Left lung (tissue), 14 donors: ENCODE measurements at regions of chr1 and their contacts with region 1.

Region 1: GRCh38 chr1:163071405-163072255 is 2.5 kb downstream of the RGS4 start:
- DNase-seq: peak in 2 of 4 donors; percentile 26 to 64
- ATAC-seq: peak; percentile 71
- H3K4me3 ChIP-seq: no peak overlapping the region
- H3K27ac ChIP-seq: no peak overlapping the region
- H3K4me1 ChIP-seq: peaks cover 0 to 4% of the 10 kb centered on the region in 2 donors
- H3K27me3 ChIP-seq: peaks cover 0 to 16% of the 10 kb centered on the region in 2 donors
- CTCF ChIP-seq: peak; percentile 53 to 59

Region 2: GRCh38 chr1:162878000-162878596 is 193.5 kb before region 1 on chr1:
- intact Hi-C with region 1: loop called in 1 of 2 experiments (anchors 10 kb)
- DNase-seq: peak in 2 of 4 donors; percentile 26 to 53
- ATAC-seq: peak; percentile 81
- H3K4me3 ChIP-seq: no peak overlapping the region
- H3K27ac ChIP-seq: no peak overlapping the region
- H3K4me1 ChIP-seq: no peaks in the 10 kb centered on the region
- H3K27me3 ChIP-seq: peaks cover 0 to 7% of the 10 kb centered on the region in 2 donors
- CTCF ChIP-seq: peak; percentile 57 to 71

Region 3: GRCh38 chr1:163315773-163316374 is 244.2 kb after region 1 on chr1:
- intact Hi-C with region 1: loop called in 1 of 2 experiments (anchors 10 kb)
- DNase-seq: peak in 1 of 4 donors; percentile 62
- ATAC-seq: no peak
- H3K4me3 ChIP-seq: no peak overlapping the region
- H3K27ac ChIP-seq: no peak overlapping the region
- H3K4me1 ChIP-seq: no peaks in the 10 kb centered on the region
- H3K27me3 ChIP-seq: no peaks in the 10 kb centered on the region
- CTCF ChIP-seq: peak; percentile 50 to 65